Activated CD8-positive, alpha-beta T cell treated with anti-CD3 and anti-CD28 coated beads, Interleukin-2, amount 10 ng/mL, durations not matched to agents 7 days and 5 days (primary cell): ENCODE measurements at regions of chr3 and their contacts with region 1.

Region 1: GRCh38 chr3:186849374-186849975 is 7.0 kb downstream of the ADIPOQ start:
- DNase-seq: no peak
- ATAC-seq: peak; percentile 75
- H3K4me3 Mint-ChIP-seq: no peak overlapping the region
- H3K27ac Mint-ChIP-seq: no peak overlapping the region
- H3K4me1 Mint-ChIP-seq: peaks cover 10% of the 10 kb centered on the region
- H3K27me3 Mint-ChIP-seq: peaks cover 14% of the 10 kb centered on the region

Region 2: DNA sequence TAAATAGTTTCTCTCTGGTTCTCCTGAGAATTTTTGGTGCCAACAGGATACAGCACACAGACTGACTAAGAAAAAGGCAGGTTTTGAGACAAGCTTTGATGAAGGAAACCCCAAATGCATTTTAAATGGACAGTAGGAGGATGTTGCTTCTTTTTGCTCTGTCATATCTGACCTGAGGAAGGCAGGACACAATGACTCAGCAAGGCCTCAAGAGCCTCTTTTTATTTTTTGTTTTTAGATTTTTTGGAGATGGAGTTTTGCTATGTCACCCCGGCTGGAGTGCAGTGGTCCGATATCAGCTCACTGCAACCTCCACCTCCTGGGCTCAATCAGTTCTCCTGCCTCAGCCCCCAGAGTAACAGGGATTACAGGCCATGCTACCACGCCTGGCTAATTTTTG is 149.2 kb before region 1 on chr3:
- CTCF ChIA-PET with region 1: no interaction called
- POLR2A ChIA-PET with region 1: no interaction called
- DNase-seq: no peak
- ATAC-seq: no peak
- H3K4me3 Mint-ChIP-seq: no peak overlapping the region
- H3K27ac Mint-ChIP-seq: no peak overlapping the region
- H3K4me1 Mint-ChIP-seq: no peaks in the 10 kb centered on the region
- H3K27me3 Mint-ChIP-seq: peaks cover 38% of the 10 kb centered on the region

Region 3: GRCh38 chr3:186930641-186931531 is 81.4 kb after region 1 on chr3:
- CTCF ChIA-PET with region 1: interaction called, 78 read pairs
- POLR2A ChIA-PET with region 1: interaction called, 9 read pairs
- DNase-seq: peak; percentile 78
- ATAC-seq: peak; percentile 80
- H3K4me3 Mint-ChIP-seq: peak overlapping the region; percentile 99
- H3K27ac Mint-ChIP-seq: peak overlapping the region; percentile 87
- H3K4me1 Mint-ChIP-seq: peaks cover 28% of the 10 kb centered on the region
- H3K27me3 Mint-ChIP-seq: no peaks in the 10 kb centered on the region

Region 4: GRCh38 chr3:187025656-187026316 is 176.3 kb after region 1 on chr3:
- CTCF ChIA-PET with region 1: interaction called, 19 read pairs
- POLR2A ChIA-PET with region 1: interaction called, 4 read pairs
- DNase-seq: peak; percentile 52
- ATAC-seq: peak; percentile 29
- H3K4me3 Mint-ChIP-seq: peak overlapping the region; percentile 79
- H3K27ac Mint-ChIP-seq: peak overlapping the region; percentile 90
- H3K4me1 Mint-ChIP-seq: peaks cover 61% of the 10 kb centered on the region
- H3K27me3 Mint-ChIP-seq: no peaks in the 10 kb centered on the region

Region 5: GRCh38 chr3:187066228-187066995 is 216.9 kb after region 1 on chr3:
- CTCF ChIA-PET with region 1: interaction called, 31 read pairs
- POLR2A ChIA-PET with region 1: no interaction called
- DNase-seq: peak; percentile 68
- ATAC-seq: peak; percentile 81
- H3K4me3 Mint-ChIP-seq: no peak overlapping the region
- H3K27ac Mint-ChIP-seq: no peak overlapping the region
- H3K4me1 Mint-ChIP-seq: peaks cover 40% of the 10 kb centered on the region
- H3K27me3 Mint-ChIP-seq: no peaks in the 10 kb centered on the region

Region 6: DNA sequence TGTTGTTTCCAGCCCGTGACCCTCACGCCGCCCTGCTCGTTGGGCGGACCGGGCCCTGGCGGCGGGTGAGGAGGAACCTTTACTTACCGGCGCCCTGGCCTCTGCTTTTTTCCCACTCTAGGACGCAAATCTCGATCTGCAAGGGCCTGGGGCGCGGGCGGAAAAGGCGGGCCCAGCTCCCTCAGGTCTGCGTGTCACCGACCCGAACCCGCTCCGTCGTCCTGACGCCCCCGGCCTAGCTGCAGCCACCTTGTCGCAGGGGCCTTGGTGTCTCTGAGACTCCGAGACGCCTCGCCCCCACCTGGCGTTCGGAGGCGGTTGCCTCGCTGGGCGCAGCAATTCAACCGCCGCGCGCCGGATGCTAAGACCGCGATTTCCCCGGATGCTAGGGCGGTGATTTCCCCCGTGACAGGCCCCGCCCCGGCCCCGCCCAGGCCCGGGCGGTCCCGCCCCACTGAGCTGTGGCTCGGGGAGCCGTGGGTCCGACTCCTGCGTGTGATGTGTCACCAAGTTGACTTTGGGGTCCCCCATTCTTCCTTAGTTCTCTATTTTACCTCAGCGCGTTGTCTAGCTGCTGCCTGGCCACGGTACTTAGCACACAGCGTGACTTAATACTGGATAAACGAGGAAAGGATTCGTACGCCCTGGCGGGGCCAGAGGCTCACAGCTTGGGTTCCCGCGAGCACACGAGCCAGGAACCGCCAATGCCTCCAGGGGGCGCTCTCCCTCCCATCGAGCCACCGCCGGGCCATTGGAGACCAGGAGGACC is 289.8 kb after region 1 on chr3 and contains the start of gene RPL39L:
- CTCF ChIA-PET with region 1: interaction called, 13 read pairs
- POLR2A ChIA-PET with region 1: no interaction called
- DNase-seq: peak; percentile 96
- ATAC-seq: peak; percentile 98
- H3K4me3 Mint-ChIP-seq: peak within 1 kb of the TSS; percentile 91
- H3K27ac Mint-ChIP-seq: peak within 1 kb of the TSS; percentile 98
- H3K4me1 Mint-ChIP-seq: peaks cover 24% of the 10 kb centered on the region
- H3K27me3 Mint-ChIP-seq: no peaks in the 10 kb centered on the region
- total RNA-seq, gene RPL39L: 21.1 to 23.5 TPM